Transverse colon (tissue), 4 donors: ENCODE measurements at regions of chr2 and their contacts with region 1.

Region 1: DNA sequence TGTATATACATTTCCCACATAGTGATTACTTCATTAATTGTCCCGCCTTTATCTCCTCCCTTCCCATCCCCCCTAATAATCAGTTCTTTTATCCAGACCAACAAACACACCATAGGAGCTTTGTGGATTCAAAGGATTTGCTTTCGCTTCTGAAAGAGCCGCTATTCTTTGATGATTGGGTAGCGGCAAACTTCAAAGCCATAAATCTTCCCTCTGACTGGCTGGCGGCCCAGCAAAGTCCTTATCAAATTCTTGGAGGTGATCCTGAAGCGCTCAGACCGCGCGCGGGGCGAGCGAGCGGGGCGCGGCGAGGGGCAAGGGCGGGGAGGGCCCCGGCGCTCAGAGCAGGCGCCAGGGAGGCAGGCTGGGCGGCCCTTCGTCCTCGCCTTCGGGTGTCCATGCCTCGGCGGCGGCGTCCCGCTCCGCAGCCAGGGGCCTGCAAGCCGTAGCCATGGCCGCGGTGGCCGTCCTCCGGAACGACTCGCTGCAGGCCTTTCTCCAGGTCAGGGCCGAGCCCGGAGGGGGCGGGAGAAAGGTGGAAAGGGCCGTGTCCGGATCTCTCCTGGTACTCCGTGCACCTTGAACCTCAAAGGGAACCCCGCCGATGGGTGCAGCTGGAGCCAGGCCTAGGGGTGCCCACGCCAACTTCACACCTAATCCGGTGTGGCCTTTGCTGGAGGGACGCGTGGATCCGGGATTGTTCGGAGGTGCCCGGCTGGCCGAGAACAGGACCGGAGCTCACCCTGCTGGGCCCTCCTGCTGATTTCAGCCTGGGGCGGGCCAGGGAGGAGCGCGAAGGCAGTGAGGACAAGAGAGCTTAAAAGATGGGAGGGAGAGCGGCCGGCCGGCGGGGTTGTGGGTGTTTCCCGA is at the start of gene SP5:
- DNase-seq: peak; percentile 44
- H3K4me3 ChIP-seq: peak within 1 kb of the TSS; percentile 36 to 62 (median 42)
- H3K27ac ChIP-seq: peak within 1 kb of the TSS; percentile 49 to 72 (median 58)
- H3K4me1 ChIP-seq: peaks cover 7 to 49% (median 33%) of the 10 kb centered on the region in 4 donors
- H3K27me3 ChIP-seq: peaks cover 96% of the 10 kb centered on the region
- CTCF ChIP-seq: no peak
- EP300 ChIP-seq: no peak
- POLR2A ChIP-seq: no peak
- total RNA-seq, gene SP5: 0.41 to 2.2 TPM in 2 of 4 donors, not detected in the others

Region 2: GRCh38 chr2:170409164-170409535 is 306.1 kb before region 1 on chr2:
- in situ Hi-C with region 1: loop called in 1 of 4 experiments (anchors 25 kb)
- intact Hi-C with region 1: no loop called
- DNase-seq: peak; percentile 78
- H3K4me3 ChIP-seq: peak overlapping the region in 1 of 4 donors; percentile 6
- H3K27ac ChIP-seq: no peak overlapping the region
- H3K4me1 ChIP-seq: peaks cover 0 to 15% (median 7%) of the 10 kb centered on the region in 4 donors
- H3K27me3 ChIP-seq: peaks cover 15% of the 10 kb centered on the region
- CTCF ChIP-seq: peak; percentile 87 to 90 (median 88)
- EP300 ChIP-seq: no peak
- POLR2A ChIP-seq: no peak

Region 3: DNA sequence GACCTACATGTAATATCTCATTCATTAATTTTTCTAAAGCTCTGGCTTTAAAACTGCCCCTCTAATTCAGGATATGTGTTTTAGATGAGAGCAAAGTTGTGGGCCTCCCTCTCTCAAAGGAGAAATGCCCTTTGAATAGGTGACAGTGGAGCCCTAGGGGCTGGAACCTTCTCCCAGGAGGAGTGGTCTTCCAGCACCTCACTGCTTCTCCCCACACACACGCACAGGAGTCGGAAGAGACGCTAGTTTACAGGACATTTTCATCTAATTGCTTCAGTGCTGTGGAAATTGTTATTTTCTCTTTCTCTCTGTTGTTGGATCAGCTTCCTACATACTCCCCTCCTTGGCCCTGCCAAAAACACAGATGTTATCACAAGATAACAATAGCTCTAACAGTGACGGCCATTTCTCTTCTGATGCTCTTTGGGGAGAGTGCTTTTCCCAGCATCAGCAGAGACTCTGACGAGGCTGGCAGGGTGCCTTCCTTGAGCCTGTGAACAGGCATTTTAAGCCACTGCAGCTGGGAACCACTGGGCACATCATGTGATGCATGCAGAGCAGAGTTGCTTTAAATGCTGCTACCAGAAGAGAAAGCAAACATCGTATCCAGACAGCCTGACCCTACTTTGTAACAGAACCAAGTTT is 209.5 kb before region 1 on chr2:
- in situ Hi-C with region 1: no loop called
- intact Hi-C with region 1: loop called (anchors 10 kb)
- DNase-seq: peak; percentile 40
- H3K4me3 ChIP-seq: no peak overlapping the region
- H3K27ac ChIP-seq: peak overlapping the region; percentile 40 to 56 (median 42)
- H3K4me1 ChIP-seq: peaks cover 0 to 22% (median 6%) of the 10 kb centered on the region in 4 donors
- H3K27me3 ChIP-seq: no peaks in the 10 kb centered on the region
- CTCF ChIP-seq: no peak
- EP300 ChIP-seq: no peak
- POLR2A ChIP-seq: no peak